Psoas muscle (tissue), 8 donors: ENCODE measurements at regions of chr5 and their contacts with region 1.

Region 1: GRCh38 chr5:116361171-116361967 is 213.3 kb downstream of the SEMA6A start:
- DNase-seq: peak; percentile 50 to 73
- ATAC-seq: peak; percentile 62 to 72 (median 64)
- H3K4me3 ChIP-seq: peak overlapping the region; percentile 54
- H3K27ac ChIP-seq: peak overlapping the region; percentile 68
- H3K4me1 ChIP-seq: peaks cover 22% of the 10 kb centered on the region
- H3K27me3 ChIP-seq: no peaks in the 10 kb centered on the region
- CTCF ChIP-seq: no peak

Region 2: DNA sequence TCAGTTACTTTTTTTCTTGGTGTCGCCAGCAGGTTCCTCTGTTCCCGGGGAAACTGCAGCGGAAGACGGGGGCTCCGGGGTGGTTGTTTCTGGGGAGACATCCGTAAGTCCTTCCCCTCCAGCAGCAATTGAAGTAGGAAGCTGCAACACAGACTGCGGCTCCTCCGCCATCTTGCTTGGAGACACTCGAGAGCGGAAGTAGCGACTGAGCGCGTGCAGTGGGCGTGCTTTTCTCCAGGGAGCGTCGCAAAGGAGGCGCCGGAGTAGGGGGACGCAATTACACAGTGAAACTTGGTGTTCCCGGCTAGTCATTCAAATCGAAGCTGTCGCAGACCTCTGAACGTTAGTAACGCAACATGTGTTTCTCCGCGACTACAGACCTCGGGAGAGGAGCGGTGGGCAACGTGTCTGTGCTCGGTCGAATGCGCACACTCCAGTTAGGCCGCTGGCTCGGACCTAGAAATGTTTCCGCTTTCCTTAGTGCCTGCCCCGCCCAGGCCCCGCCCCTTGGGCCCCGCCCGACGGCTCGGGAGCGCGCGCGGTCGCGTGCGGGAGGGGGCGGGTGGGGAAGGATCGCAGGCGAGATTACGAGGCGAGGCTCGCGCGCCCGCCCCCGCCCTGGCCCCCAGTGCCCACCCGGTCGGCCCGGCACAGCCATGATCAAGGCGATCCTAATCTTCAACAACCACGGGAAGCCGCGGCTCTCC is 519.8 kb before region 1 on chr5 and contains the starts of genes AP3S1 and ATG12:
- intact Hi-C with region 1: no loop called
- DNase-seq: peak; percentile 92 to 95
- ATAC-seq: peak; percentile 95 to 96 (median 96)
- H3K4me3 ChIP-seq: peak within 1 kb of the TSS; percentile 87
- H3K27ac ChIP-seq: peak within 1 kb of the TSS; percentile 96
- H3K4me1 ChIP-seq: peaks cover 53% of the 10 kb centered on the region
- H3K27me3 ChIP-seq: no peaks in the 10 kb centered on the region
- CTCF ChIP-seq: no peak
- total RNA-seq, gene AP3S1: 20.2 to 29.6 (median 26.3) TPM
- total RNA-seq, gene ATG12: 20.3 to 32.8 (median 27.1) TPM

Region 3: DNA sequence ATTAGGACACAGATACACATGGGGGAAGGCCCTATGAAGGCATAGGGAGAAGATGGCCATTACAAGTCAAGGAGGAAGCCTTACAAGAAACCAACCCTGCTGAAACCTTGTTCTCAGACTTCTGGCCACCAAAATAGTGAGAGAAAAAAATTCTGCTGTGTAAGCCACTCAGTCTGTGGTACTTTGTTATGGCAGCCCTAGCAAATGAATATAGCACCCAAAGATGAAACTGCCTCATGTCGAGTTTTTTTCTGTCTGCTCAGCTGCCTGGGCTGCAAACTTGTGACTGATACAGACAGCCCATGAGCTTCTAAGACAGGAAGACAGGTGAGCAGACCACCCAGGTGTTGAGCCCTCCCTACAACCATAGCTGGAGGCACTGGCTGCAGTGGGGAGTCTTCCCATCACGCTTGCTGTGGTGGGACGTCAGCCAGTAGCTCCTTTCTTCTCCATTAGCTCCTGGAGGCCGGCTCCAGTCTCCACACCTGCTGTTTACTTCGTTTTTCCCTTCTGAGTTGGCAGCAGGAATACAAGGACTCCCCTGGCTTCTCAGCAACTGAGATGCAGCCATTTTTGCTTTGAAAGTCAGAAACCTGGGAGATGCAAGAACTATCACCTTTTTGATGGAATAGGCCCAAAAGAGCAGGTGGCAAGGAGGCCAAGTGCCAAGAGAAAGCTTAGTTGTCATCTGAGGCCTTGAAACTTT is 48.4 kb after region 1 on chr5:
- intact Hi-C with region 1: loop called in 1 of 2 experiments (anchors 5 kb)
- DNase-seq: no peak
- ATAC-seq: peak in 2 of 4 donors; percentile 23 to 47
- H3K4me3 ChIP-seq: no peak overlapping the region
- H3K27ac ChIP-seq: peak overlapping the region; percentile 57
- H3K4me1 ChIP-seq: peaks cover 22% of the 10 kb centered on the region
- H3K27me3 ChIP-seq: no peaks in the 10 kb centered on the region
- CTCF ChIP-seq: no peak

Region 4: DNA sequence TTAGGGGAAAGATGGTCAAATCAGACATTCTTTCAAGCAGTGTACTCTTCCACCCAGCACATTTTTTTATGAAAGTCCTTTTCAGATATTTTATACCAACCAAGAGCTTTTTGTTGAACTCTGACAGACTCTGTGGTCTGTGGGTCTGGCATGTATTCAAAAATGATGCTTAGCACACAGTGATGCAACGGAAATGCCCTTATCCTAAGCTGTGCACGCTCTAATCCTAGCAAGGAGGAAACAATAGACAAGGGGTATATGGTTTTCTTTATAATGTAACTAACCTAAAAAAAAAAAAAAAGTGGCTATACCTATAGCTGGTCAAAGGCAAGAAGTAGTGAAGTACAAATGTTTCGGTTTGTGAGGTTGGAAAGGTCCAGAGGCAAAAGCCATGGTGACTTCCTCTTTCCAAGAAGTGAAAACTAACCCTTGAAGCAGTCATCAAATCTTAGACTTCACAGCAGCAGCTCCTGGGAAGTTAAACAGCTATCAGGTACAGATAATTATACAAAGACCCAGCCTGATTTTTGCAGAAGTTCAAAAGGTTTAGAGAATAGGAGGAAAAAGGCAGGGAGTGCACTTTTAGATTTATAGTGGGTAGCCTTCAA is 130.8 kb after region 1 on chr5:
- intact Hi-C with region 1: loop called in 1 of 2 experiments (anchors 10 kb)
- DNase-seq: no peak
- ATAC-seq: peak; percentile 53 to 65 (median 58)
- H3K4me3 ChIP-seq: no peak overlapping the region
- H3K27ac ChIP-seq: no peak overlapping the region
- H3K4me1 ChIP-seq: peaks cover 12% of the 10 kb centered on the region
- H3K27me3 ChIP-seq: no peaks in the 10 kb centered on the region
- CTCF ChIP-seq: no peak